B cell (primary cell): ENCODE measurements at regions of chr7 and their contacts with region 1.

Region 1: DNA sequence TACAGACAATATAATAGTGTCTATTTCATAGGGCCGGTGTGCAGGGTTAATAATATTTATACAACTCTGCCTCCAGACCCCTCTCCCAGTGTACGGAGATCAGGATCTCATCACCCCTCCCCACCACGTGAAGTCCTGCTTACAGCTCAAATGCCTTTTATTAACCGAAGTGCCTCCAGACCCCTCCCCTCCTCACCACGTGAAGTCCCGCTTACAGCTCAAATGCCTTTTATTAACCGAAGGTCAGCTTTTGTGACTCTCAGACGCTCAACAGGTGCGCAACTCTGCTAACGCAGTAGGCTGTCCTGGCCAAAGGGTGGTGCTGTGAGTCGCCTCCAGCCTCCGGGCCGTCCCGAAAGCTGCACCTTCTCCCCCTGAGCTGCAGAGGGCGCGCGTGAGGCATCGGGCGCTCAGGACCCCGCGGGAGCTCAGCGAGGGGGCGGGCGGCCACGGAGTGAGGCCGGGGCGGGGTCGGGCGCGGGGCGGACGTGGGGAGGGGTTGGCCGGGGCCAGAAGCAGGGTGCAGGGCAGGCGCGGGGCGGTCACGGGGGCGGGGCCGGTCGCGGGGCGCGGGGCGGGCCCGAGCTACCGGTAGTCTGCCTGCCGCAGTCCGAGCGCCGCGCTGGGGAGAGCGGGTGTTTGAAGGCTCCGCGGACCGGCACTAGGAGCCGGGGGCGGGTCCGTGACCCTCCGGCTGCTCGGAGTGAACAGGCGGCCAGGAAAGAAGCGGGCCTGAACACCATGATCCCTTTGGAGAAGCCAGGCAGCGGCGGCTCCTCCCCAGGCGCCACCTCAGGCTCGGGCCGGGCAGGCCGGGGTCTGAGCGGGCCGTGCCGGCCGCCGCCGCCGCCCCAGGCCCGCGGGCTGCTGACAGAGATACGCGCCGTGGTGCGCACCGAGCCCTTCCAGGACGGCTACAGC is at the start of gene STK17A:
- DNase-seq: peak; percentile 97
- ATAC-seq: peak; percentile 83
- H3K4me3 ChIP-seq: peak within 1 kb of the TSS; percentile 89 to 98 (median 91)
- H3K4me3 Mint-ChIP-seq: peak within 1 kb of the TSS; percentile 98
- H3K27ac ChIP-seq: peak within 1 kb of the TSS; percentile 86 to 94
- H3K27ac Mint-ChIP-seq: peak within 1 kb of the TSS; percentile 98
- H3K4me1 ChIP-seq: peaks cover 14 to 23% of the 10 kb centered on the region in 2 donors
- H3K4me1 Mint-ChIP-seq: peaks cover 35% of the 10 kb centered on the region
- H3K27me3 ChIP-seq: peaks cover 0 to 2% (median 0%) of the 10 kb centered on the region in 4 experiments
- H3K27me3 Mint-ChIP-seq: no peaks in the 10 kb centered on the region
- CTCF ChIP-seq: peak; percentile 96
- total RNA-seq, gene STK17A: 111 and 115 TPM in 2 replicates

Region 2: DNA sequence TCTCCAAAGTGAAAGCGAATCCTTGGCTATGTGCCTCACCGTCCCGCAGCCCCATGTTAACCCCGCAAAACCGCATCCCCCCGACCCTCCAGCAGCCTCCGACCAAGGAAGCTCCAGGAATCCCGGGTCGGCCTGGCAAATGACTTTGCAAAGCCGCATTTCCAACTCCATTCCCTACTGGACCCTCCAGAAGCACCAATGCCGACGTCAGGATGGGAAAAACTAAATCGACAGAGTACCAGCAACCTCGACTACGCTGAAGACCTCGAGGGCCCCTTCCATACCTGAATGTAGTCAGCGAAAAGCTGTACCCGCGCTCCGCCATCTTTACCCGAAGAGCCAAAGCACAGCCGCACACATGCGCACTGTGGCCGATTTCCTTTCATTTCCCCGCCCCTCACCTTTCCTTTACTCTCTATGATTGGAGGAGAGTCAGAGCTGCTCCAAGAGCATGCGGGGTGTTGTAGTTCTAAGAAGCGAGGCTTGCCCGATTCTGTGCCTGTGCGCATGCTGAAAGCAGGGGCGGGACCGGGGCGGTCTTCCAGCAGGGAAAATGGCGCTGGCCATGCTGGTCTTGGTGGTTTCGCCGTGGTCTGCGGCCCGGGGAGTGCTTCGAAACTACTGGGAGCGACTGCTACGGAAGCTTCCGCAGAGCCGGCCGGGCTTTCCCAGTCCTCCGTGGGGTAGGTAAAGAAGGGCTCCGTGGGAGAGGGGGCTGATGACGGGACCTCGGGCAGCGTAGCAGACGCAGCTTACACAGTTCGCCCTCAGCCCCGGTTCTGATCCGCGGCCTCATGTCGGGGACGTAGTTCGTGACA is 650.7 kb before region 1 on chr7 and contains the starts of genes MRPL32 and PSMA2:
- CTCF ChIA-PET with region 1: interaction called, 6 read pairs
- POLR2A ChIA-PET with region 1: interaction called, 5 read pairs
- intact Hi-C with region 1: loop called (anchors 2 kb)
- DNase-seq: peak; percentile 97
- ATAC-seq: peak; percentile 100
- H3K4me3 ChIP-seq: peak within 1 kb of the TSS; percentile 79 to 98 (median 90)
- H3K4me3 Mint-ChIP-seq: peak within 1 kb of the TSS; percentile 91
- H3K27ac ChIP-seq: peak within 1 kb of the TSS; percentile 77 to 88
- H3K27ac Mint-ChIP-seq: peak within 1 kb of the TSS; percentile 94
- H3K4me1 ChIP-seq: peaks cover 36 to 38% of the 10 kb centered on the region in 2 donors
- H3K4me1 Mint-ChIP-seq: peaks cover 67% of the 10 kb centered on the region
- H3K27me3 ChIP-seq: no peaks in the 10 kb centered on the region
- H3K27me3 Mint-ChIP-seq: no peaks in the 10 kb centered on the region
- CTCF ChIP-seq: no peak
- total RNA-seq, gene MRPL32: 31.7 and 34.2 TPM in 2 replicates
- total RNA-seq, gene PSMA2: 40.6 and 47.8 TPM in 2 replicates

Region 3: DNA sequence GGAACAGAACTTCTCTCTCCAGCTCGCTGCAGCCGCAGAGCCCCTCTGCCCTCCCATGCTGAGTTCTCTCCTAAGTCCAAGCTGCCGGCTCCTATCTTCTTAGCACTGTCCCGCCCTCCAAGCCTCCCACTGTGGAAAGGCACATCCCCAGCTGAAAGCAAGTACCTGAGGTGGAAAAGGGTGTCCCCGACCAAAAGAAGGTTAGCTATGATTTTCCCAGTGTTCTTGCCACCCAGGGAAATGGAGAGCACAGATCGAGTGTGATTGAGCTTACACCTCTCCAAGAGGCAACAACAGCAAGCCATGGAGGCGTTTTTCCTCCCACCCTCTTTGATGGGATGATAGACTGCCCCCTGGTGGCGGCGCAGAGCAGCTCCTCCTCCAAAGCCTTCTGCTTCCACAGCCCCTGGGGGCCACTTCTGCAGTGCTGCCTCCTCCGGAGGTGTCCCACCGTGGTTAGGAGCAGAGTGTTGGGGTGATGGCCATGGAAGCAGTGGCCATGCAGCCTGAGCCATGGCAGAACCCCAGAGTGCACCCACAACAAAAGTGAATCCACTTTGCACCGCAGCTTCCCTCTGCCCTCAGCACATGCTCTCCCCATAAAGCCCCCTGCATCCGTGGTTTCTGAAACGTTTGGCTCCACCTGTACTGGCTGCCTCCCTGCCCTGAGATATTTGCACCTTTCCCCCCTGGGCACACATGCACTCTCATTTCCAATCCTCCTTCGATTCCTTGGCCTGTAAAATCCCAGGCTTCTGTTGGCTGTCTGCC is 142.9 kb before region 1 on chr7:
- CTCF ChIA-PET with region 1: no interaction called
- POLR2A ChIA-PET with region 1: no interaction called
- intact Hi-C with region 1: no loop called
- DNase-seq: peak; percentile 60
- ATAC-seq: no peak
- H3K4me3 ChIP-seq: no peak overlapping the region
- H3K4me3 Mint-ChIP-seq: no peak overlapping the region
- H3K27ac ChIP-seq: no peak overlapping the region
- H3K27ac Mint-ChIP-seq: no peak overlapping the region
- H3K4me1 ChIP-seq: no peaks in the 10 kb centered on the region
- H3K4me1 Mint-ChIP-seq: no peaks in the 10 kb centered on the region
- H3K27me3 ChIP-seq: peaks cover 0 to 4% (median 0%) of the 10 kb centered on the region in 4 experiments
- H3K27me3 Mint-ChIP-seq: peaks cover 22% of the 10 kb centered on the region
- CTCF ChIP-seq: peak; percentile 75

Region 4: GRCh38 chr7:43602271-43602670 is 19.5 kb after region 1 on chr7:
- CTCF ChIA-PET with region 1: interaction called, 22 read pairs
- POLR2A ChIA-PET with region 1: interaction called, 4 read pairs
- intact Hi-C with region 1: no loop called
- DNase-seq: no peak
- ATAC-seq: no peak
- H3K4me3 ChIP-seq: no peak overlapping the region
- H3K4me3 Mint-ChIP-seq: no peak overlapping the region
- H3K27ac ChIP-seq: peak overlapping the region in 1 of 2 donors; percentile 67
- H3K27ac Mint-ChIP-seq: no peak overlapping the region
- H3K4me1 ChIP-seq: peaks cover 27 to 58% of the 10 kb centered on the region in 2 donors
- H3K4me1 Mint-ChIP-seq: peaks cover 38% of the 10 kb centered on the region
- H3K27me3 ChIP-seq: no peaks in the 10 kb centered on the region
- H3K27me3 Mint-ChIP-seq: no peaks in the 10 kb centered on the region
- CTCF ChIP-seq: no peak

Region 5: DNA sequence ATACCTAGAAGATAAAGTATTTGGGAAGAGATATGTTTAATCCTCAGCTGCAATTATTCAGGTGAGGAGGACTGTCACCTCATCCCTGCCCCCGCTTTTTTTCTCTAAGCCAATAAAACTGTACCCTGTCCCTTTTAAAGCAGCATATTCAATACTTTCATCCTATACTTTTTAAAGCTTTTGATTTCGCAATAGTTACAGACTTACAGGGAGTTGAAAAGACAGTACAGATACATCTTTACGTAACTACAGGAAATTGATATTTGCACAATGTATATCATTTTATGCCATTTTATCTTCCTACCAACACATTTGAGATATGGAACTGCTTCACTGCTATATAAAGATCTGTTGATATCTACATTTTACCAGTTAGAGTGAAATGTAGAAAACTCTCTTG is 47.7 kb after region 1 on chr7:
- CTCF ChIA-PET with region 1: interaction called, 52 read pairs
- POLR2A ChIA-PET with region 1: no interaction called
- intact Hi-C with region 1: loop called (anchors 2 kb)
- DNase-seq: no peak
- ATAC-seq: no peak
- H3K4me3 ChIP-seq: no peak overlapping the region
- H3K4me3 Mint-ChIP-seq: no peak overlapping the region
- H3K27ac ChIP-seq: peak overlapping the region in 1 of 2 donors; percentile 68
- H3K27ac Mint-ChIP-seq: peak overlapping the region; percentile 50
- H3K4me1 ChIP-seq: peaks cover 25% of the 10 kb centered on the region in 2 donors
- H3K4me1 Mint-ChIP-seq: peaks cover 71% of the 10 kb centered on the region
- H3K27me3 ChIP-seq: no peaks in the 10 kb centered on the region
- H3K27me3 Mint-ChIP-seq: no peaks in the 10 kb centered on the region
- CTCF ChIP-seq: no peak

Region 6: GRCh38 chr7:43686991-43687390 is 104.2 kb after region 1 on chr7:
- CTCF ChIA-PET with region 1: interaction called, 74 read pairs
- POLR2A ChIA-PET with region 1: interaction called, 7 read pairs
- intact Hi-C with region 1: no loop called
- DNase-seq: no peak
- ATAC-seq: no peak
- H3K4me3 ChIP-seq: no peak overlapping the region
- H3K4me3 Mint-ChIP-seq: no peak overlapping the region
- H3K27ac ChIP-seq: no peak overlapping the region
- H3K27ac Mint-ChIP-seq: no peak overlapping the region
- H3K4me1 ChIP-seq: peaks cover 22 to 24% of the 10 kb centered on the region in 2 donors
- H3K4me1 Mint-ChIP-seq: peaks cover 70% of the 10 kb centered on the region
- H3K27me3 ChIP-seq: no peaks in the 10 kb centered on the region
- H3K27me3 Mint-ChIP-seq: no peaks in the 10 kb centered on the region
- CTCF ChIP-seq: no peak

Region 7: GRCh38 chr7:43721193-43721806 is 138.5 kb after region 1 on chr7:
- CTCF ChIA-PET with region 1: interaction called, 166 read pairs
- POLR2A ChIA-PET with region 1: interaction called, 3 read pairs
- intact Hi-C with region 1: loop called (anchors 1 kb)
- DNase-seq: peak; percentile 73
- ATAC-seq: peak; percentile 33
- H3K4me3 ChIP-seq: no peak overlapping the region
- H3K4me3 Mint-ChIP-seq: no peak overlapping the region
- H3K27ac ChIP-seq: no peak overlapping the region
- H3K27ac Mint-ChIP-seq: no peak overlapping the region
- H3K4me1 ChIP-seq: no peaks in the 10 kb centered on the region
- H3K4me1 Mint-ChIP-seq: peaks cover 22% of the 10 kb centered on the region
- H3K27me3 ChIP-seq: no peaks in the 10 kb centered on the region
- H3K27me3 Mint-ChIP-seq: no peaks in the 10 kb centered on the region
- CTCF ChIP-seq: peak; percentile 89

Region 8: GRCh38 chr7:43834463-43835251 is 251.9 kb after region 1 on chr7:
- CTCF ChIA-PET with region 1: interaction called, 41 read pairs
- POLR2A ChIA-PET with region 1: interaction called, 3 read pairs
- intact Hi-C with region 1: loop called (anchors 1 kb)
- DNase-seq: peak; percentile 72
- ATAC-seq: peak; percentile 46
- H3K4me3 ChIP-seq: peak overlapping the region in 4 of 5 experiments; percentile 35 to 68 (median 50)
- H3K4me3 Mint-ChIP-seq: peak overlapping the region; percentile 93
- H3K27ac ChIP-seq: no peak overlapping the region
- H3K27ac Mint-ChIP-seq: peak overlapping the region; percentile 92
- H3K4me1 ChIP-seq: peaks cover 13 to 14% of the 10 kb centered on the region in 2 donors
- H3K4me1 Mint-ChIP-seq: peaks cover 18% of the 10 kb centered on the region
- H3K27me3 ChIP-seq: no peaks in the 10 kb centered on the region
- H3K27me3 Mint-ChIP-seq: peaks cover under 1% of the 10 kb centered on the region
- CTCF ChIP-seq: no peak